A549 (cell line): ENCODE measurements at regions of chr22 and their contacts with region 1.

Region 1: DNA sequence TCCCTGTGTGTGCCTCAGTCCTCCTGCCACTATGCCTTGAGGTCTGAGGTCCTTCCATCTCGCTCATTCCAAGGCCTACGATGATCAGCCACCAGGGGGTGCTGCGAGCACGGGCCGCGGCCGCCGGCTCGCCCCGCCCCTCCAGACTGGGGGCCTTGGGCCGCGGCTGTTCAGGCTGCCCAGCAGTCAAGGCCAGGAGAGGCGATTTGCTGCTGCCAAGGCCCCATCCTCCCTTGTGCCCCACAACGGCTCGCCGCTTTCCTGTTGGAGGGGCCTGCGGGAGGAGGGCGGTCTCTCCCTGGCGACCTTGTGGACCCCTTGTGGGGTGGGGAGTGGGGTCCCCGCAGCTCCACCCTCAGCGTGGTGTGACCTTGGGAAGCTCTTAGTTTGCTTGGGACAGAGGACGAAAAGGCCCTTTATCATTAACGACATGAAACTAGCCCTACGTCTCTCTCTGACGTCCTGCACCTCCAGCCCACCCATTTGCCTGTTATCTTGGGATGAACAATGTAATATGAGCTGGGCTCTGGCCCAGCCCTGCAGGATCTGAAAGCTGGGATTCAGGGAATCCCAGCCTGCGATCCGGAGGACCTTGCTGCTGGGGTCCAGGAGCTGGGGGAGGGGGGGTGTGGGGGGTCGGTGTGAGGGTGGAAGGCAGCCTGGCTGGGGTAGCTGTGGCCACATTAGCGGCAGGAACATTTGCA is 5.3 kb upstream of the GALR3 start:
- DNase-seq: peak; percentile 68 to 69
- ATAC-seq: peak; percentile 77 to 94
- H3K4me3 ChIP-seq: 0 out of 3 replicates have a peak overlapping the region, but pooled peaks have one; percentile 29
- H3K27ac ChIP-seq: peak overlapping the region; percentile 71 to 88
- H3K4me1 ChIP-seq: peaks cover 4% of the 10 kb centered on the region; the same call in 1 of the 3 replicates
- CTCF ChIP-seq: peak; percentile 85
- EP300 ChIP-seq: no peak
- POLR2A ChIP-seq: no peak
- RAD21 ChIP-seq: peak; percentile 76 to 85

Region 2: GRCh38 chr22:37832022-37832857 is 14.4 kb after region 1 on chr22:
- CTCF ChIA-PET with region 1: interaction called, 37 read pairs
- POLR2A ChIA-PET with region 1: no interaction called
- DNase-seq: no peak
- ATAC-seq: 0 out of 6 replicates have a peak, but pooled peaks of 1 of the 2 experiments have one; percentile 21
- H3K4me3 ChIP-seq: no peak overlapping the region
- H3K27ac ChIP-seq: no peak overlapping the region
- H3K4me1 ChIP-seq: no peaks in the 10 kb centered on the region
- CTCF ChIP-seq: no peak
- EP300 ChIP-seq: no peak
- POLR2A ChIP-seq: no peak
- RAD21 ChIP-seq: no peak

Region 3: DNA sequence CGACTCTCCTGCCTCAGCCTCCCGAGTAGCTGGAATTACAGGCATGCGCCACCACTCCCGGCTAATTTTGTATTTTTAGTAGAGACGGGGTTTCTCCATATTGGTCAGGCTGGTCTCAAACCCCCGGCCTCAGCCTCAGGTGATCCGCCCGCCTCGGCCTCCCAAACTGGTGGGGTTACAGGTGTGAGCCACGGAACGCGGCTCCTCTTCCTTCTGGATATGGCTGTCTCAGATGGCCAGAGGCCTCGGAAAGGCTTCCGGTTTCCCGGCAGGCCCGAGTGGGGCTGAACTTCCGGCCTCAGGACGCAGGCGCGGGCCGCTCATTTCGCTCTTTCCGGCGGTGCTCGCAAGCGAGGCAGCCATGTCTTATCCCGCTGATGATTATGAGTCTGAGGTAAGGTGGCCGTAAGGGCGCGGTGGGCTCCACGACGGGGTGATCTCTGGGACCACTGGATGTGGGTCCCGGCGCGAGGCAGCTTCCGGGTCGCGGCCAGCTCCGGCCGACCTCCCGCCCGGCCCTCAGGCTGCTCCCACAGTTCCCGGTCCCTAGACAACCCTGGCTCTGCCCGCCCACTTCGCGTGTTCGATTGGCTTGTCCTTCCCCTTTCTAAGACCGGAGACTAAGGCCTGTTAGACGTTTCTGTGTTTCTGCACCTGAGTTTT is 31.4 kb after region 1 on chr22 and contains the start of gene EIF3L:
- CTCF ChIA-PET with region 1: interaction called, 10 read pairs
- POLR2A ChIA-PET with region 1: no interaction called
- DNase-seq: peak; percentile 90
- ATAC-seq: peak; percentile 92 to 95
- H3K4me3 ChIP-seq: peak within 1 kb of the TSS; percentile 86
- H3K27ac ChIP-seq: peak within 1 kb of the TSS; percentile 93 to 94
- H3K4me1 ChIP-seq: peaks cover 11% of the 10 kb centered on the region; the same call in 2 of the 3 replicates
- CTCF ChIP-seq: no peak
- EP300 ChIP-seq: no peak
- POLR2A ChIP-seq: peak; percentile 69
- RAD21 ChIP-seq: no peak
- polyA plus RNA-seq, gene EIF3L: 423 and 493 TPM in 2 replicates

Region 4: DNA sequence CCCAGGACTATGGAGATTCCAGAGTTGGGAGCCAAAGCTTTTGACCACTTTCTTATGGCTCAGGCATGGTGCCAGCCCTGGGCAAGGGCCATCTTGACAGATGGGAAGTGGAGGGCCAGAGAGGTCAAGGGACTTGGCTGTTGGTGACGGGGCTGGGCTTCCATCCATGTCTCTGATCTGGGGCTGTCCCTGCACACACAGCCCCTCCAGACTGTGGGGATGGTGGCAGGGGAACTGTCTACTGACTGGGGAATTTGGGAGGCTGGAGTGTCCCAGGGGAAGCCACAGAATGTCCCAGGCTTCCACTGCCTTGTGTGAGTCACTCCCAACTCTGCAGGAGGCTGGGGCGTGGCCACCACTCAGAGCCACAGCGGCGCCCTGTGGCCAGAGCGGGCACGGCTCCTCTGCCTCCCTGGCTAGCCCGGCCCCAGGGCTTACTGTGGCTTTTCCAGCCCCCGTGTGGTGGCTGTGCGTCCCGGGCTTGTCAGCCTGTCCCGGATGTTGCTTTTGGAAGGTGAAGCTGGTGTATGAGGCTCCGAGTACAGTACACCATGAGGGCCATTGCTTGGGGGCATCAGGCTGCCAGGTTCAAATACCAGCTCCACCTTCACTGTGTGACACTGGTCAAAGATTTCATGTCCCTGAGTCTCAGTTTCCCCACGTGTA is 116.0 kb after region 1 on chr22:
- CTCF ChIA-PET with region 1: interaction called, 16 read pairs
- POLR2A ChIA-PET with region 1: no interaction called
- DNase-seq: peak; percentile 84 to 87
- ATAC-seq: peak; percentile 89 to 96
- H3K4me3 ChIP-seq: no peak overlapping the region
- H3K27ac ChIP-seq: peak overlapping the region; percentile 40 to 78; a peak in 4 of 6 replicates
- H3K4me1 ChIP-seq: peaks cover 14% of the 10 kb centered on the region
- CTCF ChIP-seq: peak; percentile 78
- EP300 ChIP-seq: no peak
- POLR2A ChIP-seq: no peak
- RAD21 ChIP-seq: peak; percentile 46 to 57